Natural killer cell (primary cell): ENCODE measurements at regions of chr16 and their contacts with region 1.

Region 1: GRCh38 chr16:23877107-23878090 is 41.6 kb downstream of the PRKCB start:
- DNase-seq: peak in 1 of 2 donors; percentile 54
- ATAC-seq: no peak
- H3K4me3 ChIP-seq: no peak overlapping the region
- H3K4me3 Mint-ChIP-seq: no peak overlapping the region
- H3K27ac ChIP-seq: no peak overlapping the region
- H3K27ac Mint-ChIP-seq: peak overlapping the region; percentile 17 to 71
- H3K4me1 ChIP-seq: peaks cover 33% of the 10 kb centered on the region
- H3K4me1 Mint-ChIP-seq: peaks cover 77 to 81% of the 10 kb centered on the region in 2 donors
- H3K27me3 ChIP-seq: no peaks in the 10 kb centered on the region
- H3K27me3 Mint-ChIP-seq: no peaks in the 10 kb centered on the region
- CTCF ChIP-seq: no peak

Region 2: GRCh38 chr16:24010440-24011089 is 133.2 kb after region 1 on chr16:
- intact Hi-C with region 1: loop called (anchors 1 kb)
- DNase-seq: peak; percentile 68 to 93
- ATAC-seq: peak; percentile 54 to 67 (median 56)
- H3K4me3 ChIP-seq: no peak overlapping the region
- H3K4me3 Mint-ChIP-seq: no peak overlapping the region
- H3K27ac ChIP-seq: no peak overlapping the region
- H3K27ac Mint-ChIP-seq: no peak overlapping the region
- H3K4me1 ChIP-seq: peaks cover 50% of the 10 kb centered on the region
- H3K4me1 Mint-ChIP-seq: peaks cover 76 to 83% of the 10 kb centered on the region in 2 donors
- H3K27me3 ChIP-seq: no peaks in the 10 kb centered on the region
- H3K27me3 Mint-ChIP-seq: no peaks in the 10 kb centered on the region
- CTCF ChIP-seq: peak; percentile 84